ENCODE measurements at regions of chr19 and their contacts with region 1.

Region 1: DNA sequence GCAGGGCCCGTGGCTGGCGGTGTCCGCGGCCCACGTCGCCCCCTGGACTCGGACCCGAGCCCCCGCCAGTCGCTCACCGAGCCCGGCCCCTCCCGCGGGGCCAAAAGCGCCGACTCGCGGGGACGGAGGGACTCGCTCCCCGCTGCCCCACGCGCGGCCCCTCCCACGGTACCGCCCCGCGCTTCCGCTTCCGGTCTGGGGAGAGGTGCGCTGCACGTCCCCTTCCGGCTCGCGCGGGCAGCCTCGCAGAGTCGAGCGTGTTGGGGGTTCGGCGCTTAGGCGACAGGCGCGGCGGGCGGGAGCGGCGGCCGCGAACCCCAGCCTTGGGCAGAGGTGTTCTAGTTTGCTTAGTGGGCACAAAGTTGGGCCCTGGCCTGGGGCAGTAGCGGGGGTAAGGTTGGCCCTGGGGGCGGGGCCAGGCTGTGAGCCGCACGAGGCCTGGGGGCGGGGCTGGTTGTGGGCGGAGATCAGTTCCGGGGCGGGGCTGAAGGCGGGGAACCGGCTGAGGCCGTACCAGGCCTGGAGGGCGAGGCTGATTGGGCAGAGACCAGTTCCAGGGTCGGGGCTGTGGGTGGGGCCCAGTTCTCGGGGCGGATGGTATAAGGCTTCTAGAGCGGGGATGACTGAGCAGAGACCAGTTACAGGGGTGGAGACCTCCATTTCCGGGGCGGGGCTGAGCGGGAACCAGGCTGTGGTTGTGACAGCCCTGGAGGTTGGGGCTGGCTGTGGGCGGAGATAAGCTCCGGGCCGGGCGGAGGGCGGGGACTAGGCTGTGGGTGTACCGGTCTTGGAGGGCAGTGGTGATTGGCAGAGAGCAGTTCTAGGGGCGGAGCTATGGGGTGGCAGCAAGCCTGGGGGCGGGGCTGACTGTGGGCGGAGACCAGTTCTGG is at the starts of genes MBD3L1 and ZNF558:
- DNase-seq: peak; percentile 99
- H3K4me3 Mint-ChIP-seq: peak within 1 kb of the TSS; percentile 90
- H3K27ac Mint-ChIP-seq: peak within 1 kb of the TSS; percentile 97
- H3K4me1 Mint-ChIP-seq: peaks cover 15% of the 10 kb centered on the region
- H3K27me3 Mint-ChIP-seq: peaks cover 2% of the 10 kb centered on the region
- total RNA-seq, gene MBD3L1: not detected in 2 replicates
- total RNA-seq, gene ZNF558: 25.1 and 26.4 TPM in 2 replicates

Region 2: GRCh38 chr19:8005534-8006256 is 826.7 kb before region 1 on chr19 and contains the start of gene ELAVL1:
- intact Hi-C with region 1: loop called (anchors 10 kb)
- DNase-seq: peak; percentile 98
- H3K4me3 Mint-ChIP-seq: peak within 1 kb of the TSS; percentile 96
- H3K27ac Mint-ChIP-seq: peak within 1 kb of the TSS; percentile 89
- H3K4me1 Mint-ChIP-seq: peaks cover 30% of the 10 kb centered on the region
- H3K27me3 Mint-ChIP-seq: no peaks in the 10 kb centered on the region
- total RNA-seq, gene ELAVL1: 191 and 193 TPM in 2 replicates

Region 3: DNA sequence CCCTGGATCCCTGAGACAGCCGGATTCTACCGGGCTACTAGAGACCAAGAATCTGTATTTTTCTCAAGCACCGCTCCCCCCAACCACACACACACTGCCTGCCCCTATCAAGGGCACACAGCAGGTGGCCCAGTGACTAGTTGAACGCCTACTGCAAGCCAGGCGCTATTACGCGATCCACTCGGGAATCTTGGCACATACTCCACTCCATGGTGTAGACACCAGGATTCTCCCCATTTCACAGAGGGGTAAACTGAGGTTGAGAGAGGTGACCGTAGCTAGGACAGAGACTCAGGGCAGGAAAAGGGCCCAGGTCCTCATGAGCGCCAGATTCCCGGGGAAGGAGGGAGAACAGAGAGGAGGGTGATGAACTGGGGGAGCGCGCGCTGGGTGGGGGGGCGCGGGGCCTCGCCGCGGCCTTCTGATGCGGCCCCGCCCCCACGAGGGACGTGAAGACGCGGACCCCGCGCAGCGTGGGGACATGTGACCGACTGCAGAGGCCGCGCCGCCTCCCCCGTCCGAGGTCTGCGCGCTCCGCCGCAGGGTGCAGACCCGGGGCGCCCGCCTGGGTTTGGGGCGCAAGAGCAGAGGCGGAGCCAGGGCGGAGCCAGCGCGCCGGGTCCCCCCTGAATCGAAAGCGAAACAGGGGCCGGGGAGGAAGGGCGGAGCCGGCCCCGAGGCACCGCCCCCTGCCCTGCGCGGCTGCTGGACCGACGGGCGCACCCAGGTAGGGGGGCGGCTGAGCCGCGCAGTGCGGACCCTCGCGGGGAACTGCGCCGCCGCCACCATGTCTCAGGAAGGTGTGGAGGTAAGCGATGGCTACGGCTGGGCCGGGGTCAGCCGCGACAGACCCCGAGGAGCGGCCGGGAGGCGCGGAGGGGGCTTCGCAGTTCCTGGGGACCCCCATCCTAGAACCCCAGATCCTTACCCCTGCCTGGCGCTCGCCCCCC is 1253.5 kb after region 1 on chr19 and contains the start of gene SHFL:
- intact Hi-C with region 1: loop called (anchors 10 kb)
- DNase-seq: peak; percentile 97
- H3K4me3 Mint-ChIP-seq: peak within 1 kb of the TSS; percentile 91
- H3K27ac Mint-ChIP-seq: peak within 1 kb of the TSS; percentile 88
- H3K4me1 Mint-ChIP-seq: peaks cover 14% of the 10 kb centered on the region
- H3K27me3 Mint-ChIP-seq: no peaks in the 10 kb centered on the region
- total RNA-seq, gene SHFL: 56.0 and 60.5 TPM in 2 replicates

Measured in activated CD4-positive, alpha-beta T cell treated with anti-CD3 and anti-CD28 coated beads, Interleukin-2, amount 10 ng/mL, durations not matched to agents 24 days and 14 days (primary cell).